ENCODE measurements at regions of chr17 and their contacts with region 1.

Region 1: DNA sequence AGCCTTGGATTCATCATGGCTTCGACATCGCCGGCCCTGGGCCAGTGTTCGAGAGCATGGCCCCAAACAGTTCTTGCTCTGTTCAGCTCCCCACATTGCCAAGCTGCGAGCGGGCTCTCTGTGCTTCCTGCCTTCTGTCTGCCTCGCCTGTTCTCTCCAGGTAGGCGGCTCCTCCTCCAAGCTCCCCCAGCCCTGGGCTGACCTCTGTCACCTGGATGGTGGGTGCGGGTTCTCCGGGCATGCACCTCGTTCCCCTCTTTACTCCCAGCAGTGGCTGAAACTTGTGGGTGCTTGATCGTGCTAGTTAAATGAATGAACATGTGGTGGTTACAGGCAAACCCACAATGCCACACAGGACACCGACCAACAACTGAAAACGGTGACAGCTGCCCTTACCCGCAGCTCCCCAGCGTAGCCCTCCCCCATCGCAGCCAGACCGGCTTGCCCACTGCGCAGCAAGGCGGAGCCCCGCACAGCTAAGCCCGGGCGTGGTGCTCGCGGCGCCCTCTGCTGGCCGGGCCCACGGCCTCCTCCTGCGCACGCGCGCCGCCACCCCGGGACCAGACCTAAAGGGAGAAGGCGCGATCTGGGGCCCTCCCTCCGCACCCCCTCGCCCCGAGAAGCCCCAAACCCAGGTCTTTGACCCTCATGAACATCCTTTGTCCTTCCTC is 23.0 kb upstream of the EIF1 start:
- DNase-seq: peak; percentile 96

Region 2: GRCh38 chr17:40803617-40804082 is 862.1 kb before region 1 on chr17:
- intact Hi-C with region 1: loop called (anchors 5 to 10 kb)
- DNase-seq: peak; percentile 90

Region 3: GRCh38 chr17:40809721-40810421 is 855.8 kb before region 1 on chr17:
- intact Hi-C with region 1: loop called (anchors 5 to 10 kb)
- DNase-seq: no peak

Region 4: GRCh38 chr17:40854159-40854814 is 811.4 kb before region 1 on chr17:
- intact Hi-C with region 1: loop called in 1 of 2 experiments (anchors 1 kb)
- DNase-seq: no peak

Region 5: GRCh38 chr17:41538565-41538991 is 127.1 kb before region 1 on chr17:
- intact Hi-C with region 1: no loop called
- DNase-seq: peak; percentile 37

Region 6: DNA sequence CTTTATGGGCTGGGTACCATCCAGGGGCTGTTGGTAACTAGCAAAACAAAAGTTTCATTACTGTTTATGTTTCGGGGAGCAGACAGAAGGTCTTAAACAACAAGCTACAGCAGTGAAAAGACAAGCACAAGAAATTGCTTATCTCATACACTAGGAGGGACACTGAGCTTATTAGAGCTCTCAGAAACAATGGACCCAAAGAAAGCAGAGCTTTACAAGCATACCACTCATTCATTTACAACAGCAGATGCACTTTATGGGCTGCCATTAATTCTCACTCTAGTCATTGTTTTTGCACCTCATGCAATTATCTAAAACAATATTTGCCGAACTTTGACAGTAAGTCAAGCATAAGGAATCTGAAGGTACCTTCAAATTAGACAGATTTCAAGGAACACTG is 63.2 kb before region 1 on chr17:
- intact Hi-C with region 1: no loop called
- DNase-seq: no peak

Region 7: DNA sequence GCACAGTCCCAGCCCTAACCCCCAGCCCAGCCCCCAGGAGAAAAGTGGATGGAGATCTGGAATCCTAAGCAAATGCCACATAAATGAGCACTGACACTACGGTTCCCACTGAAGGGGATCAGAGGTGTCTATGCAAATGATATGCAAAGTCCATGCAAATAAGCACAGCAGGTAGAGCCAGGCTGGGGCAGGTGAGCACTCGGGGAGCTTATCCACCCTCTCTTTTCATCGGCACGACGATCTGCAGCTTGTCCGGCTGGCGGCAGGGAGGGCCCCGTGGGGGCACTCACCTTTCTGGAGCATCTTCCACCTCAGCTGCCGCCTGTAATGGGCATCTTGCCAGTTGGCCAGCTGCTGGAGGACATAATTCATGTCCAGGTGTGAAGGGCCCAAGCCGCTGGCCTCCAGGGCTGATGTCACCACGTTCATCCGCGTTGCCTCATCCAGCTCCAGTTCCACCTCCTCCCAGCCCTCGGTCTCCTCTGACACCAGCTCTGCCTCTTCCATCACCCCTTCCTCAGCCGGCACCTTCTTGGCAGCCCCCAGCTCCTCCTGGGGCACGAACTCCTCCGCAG is 58.9 kb after region 1 on chr17:
- intact Hi-C with region 1: no loop called
- DNase-seq: no peak

Measured in posterior vena cava (tissue), 2 donors.